B cell (primary cell): ENCODE measurements at regions of chr3 and their contacts with region 1.

Region 1: DNA sequence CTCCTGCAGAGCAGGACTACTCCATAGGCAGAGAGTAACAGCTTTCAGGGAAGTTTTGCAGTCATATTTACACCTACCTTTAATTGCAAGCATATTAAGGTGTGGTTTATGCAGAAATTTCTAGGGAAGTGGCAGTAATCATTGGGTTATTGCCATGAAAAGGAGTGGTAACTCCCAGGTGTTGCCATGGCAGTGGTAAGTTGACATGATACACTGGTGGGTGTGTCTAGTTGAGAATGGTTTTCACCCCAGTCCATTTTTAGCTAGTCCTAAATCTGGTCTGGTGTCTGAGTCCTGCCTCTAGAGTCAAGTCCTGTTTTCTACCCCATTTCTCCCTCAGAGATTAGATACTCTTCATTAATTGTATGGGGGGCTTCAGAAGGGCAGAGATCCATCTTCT is 128.4 kb upstream of the GMNC start:
- DNase-seq: no peak
- ATAC-seq: no peak
- H3K4me3 ChIP-seq: no peak overlapping the region
- H3K4me3 Mint-ChIP-seq: no peak overlapping the region
- H3K27ac ChIP-seq: no peak overlapping the region
- H3K27ac Mint-ChIP-seq: no peak overlapping the region
- H3K4me1 ChIP-seq: no peaks in the 10 kb centered on the region
- H3K4me1 Mint-ChIP-seq: no peaks in the 10 kb centered on the region
- H3K27me3 ChIP-seq: no peaks in the 10 kb centered on the region
- H3K27me3 Mint-ChIP-seq: no peaks in the 10 kb centered on the region
- CTCF ChIP-seq: no peak

Region 2: DNA sequence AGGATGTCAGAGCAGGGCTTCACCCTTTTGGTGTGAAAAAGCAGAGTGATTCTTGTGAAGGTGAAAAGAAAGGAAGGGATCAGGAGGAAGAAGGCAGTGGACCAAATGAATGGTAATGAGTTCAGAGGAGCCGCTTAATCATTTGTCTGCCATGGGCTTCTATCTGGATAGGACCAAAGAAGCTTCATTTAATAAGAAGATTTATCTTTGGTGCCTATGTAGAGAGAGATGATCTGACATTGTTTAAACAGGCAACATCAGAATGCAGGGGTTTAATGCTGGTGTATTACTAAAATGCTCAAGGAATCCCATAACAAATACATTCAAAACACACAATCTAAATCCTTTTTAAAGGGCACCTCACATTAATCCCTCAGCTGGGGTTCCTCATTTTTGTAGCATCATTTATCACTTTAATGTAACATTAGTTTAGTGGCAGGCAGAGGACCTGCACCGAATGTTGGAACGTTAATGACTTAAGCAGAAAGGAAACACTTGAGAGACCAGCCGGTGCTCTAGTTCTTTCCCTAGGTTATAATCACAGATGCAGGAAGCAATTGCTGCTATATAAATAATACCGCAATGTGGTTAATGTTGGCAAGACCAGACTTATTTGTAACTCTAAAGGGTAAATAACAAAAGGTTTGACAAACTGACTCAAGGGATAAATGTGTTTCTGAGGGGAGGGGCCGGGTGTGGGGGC is 504.9 kb before region 1 on chr3:
- CTCF ChIA-PET with region 1: no interaction called
- POLR2A ChIA-PET with region 1: interaction called, 11 read pairs
- intact Hi-C with region 1: no loop called
- DNase-seq: no peak
- ATAC-seq: no peak
- H3K4me3 ChIP-seq: no peak overlapping the region
- H3K4me3 Mint-ChIP-seq: no peak overlapping the region
- H3K27ac ChIP-seq: no peak overlapping the region
- H3K27ac Mint-ChIP-seq: no peak overlapping the region
- H3K4me1 ChIP-seq: no peaks in the 10 kb centered on the region
- H3K4me1 Mint-ChIP-seq: no peaks in the 10 kb centered on the region
- H3K27me3 ChIP-seq: peaks cover 0 to 12% (median 0%) of the 10 kb centered on the region in 4 experiments
- H3K27me3 Mint-ChIP-seq: peaks cover 36% of the 10 kb centered on the region
- CTCF ChIP-seq: no peak

Region 3: GRCh38 chr3:191005790-191006189 is 14.9 kb after region 1 on chr3:
- CTCF ChIA-PET with region 1: no interaction called
- POLR2A ChIA-PET with region 1: no interaction called
- intact Hi-C with region 1: no loop called
- DNase-seq: no peak
- ATAC-seq: no peak
- H3K4me3 ChIP-seq: no peak overlapping the region
- H3K4me3 Mint-ChIP-seq: no peak overlapping the region
- H3K27ac ChIP-seq: no peak overlapping the region
- H3K27ac Mint-ChIP-seq: no peak overlapping the region
- H3K4me1 ChIP-seq: no peaks in the 10 kb centered on the region
- H3K4me1 Mint-ChIP-seq: no peaks in the 10 kb centered on the region
- H3K27me3 ChIP-seq: peaks cover 0 to 2% (median 0%) of the 10 kb centered on the region in 4 experiments
- H3K27me3 Mint-ChIP-seq: peaks cover 15% of the 10 kb centered on the region
- CTCF ChIP-seq: no peak